ENCODE measurements at regions of chr5 and their contacts with region 1.

Region 1: GRCh38 chr5:143413958-143414669 is 10.6 kb upstream of the NR3C1 start:
- DNase-seq: no peak
- ATAC-seq: no peak
- H3K4me3 ChIP-seq: no peak overlapping the region
- H3K27ac ChIP-seq: no peak overlapping the region
- H3K4me1 ChIP-seq: no peaks in the 10 kb centered on the region; a peak in 1 of 4 replicates
- H3K27me3 ChIP-seq: no peaks in the 10 kb centered on the region
- CTCF ChIP-seq: no peak
- POLR2A ChIP-seq: no peak
- RAD21 ChIP-seq: no peak

Region 2: GRCh38 chr5:142860270-142860669 is 553.8 kb before region 1 on chr5:
- CTCF ChIA-PET with region 1: no interaction called
- POLR2A ChIA-PET with region 1: no interaction called
- RAD21 ChIA-PET with region 1: no interaction called
- intact Hi-C with region 1: no loop called
- DNase-seq: no peak
- ATAC-seq: no peak
- H3K4me3 ChIP-seq: no peak overlapping the region
- H3K27ac ChIP-seq: no peak overlapping the region
- H3K4me1 ChIP-seq: peaks cover 21 to 35% of the 10 kb centered on the region in 2 experiments; a peak in 2 of 4 replicates
- H3K27me3 ChIP-seq: no peaks in the 10 kb centered on the region
- CTCF ChIP-seq: no peak
- POLR2A ChIP-seq: no peak
- RAD21 ChIP-seq: no peak

Region 3: DNA sequence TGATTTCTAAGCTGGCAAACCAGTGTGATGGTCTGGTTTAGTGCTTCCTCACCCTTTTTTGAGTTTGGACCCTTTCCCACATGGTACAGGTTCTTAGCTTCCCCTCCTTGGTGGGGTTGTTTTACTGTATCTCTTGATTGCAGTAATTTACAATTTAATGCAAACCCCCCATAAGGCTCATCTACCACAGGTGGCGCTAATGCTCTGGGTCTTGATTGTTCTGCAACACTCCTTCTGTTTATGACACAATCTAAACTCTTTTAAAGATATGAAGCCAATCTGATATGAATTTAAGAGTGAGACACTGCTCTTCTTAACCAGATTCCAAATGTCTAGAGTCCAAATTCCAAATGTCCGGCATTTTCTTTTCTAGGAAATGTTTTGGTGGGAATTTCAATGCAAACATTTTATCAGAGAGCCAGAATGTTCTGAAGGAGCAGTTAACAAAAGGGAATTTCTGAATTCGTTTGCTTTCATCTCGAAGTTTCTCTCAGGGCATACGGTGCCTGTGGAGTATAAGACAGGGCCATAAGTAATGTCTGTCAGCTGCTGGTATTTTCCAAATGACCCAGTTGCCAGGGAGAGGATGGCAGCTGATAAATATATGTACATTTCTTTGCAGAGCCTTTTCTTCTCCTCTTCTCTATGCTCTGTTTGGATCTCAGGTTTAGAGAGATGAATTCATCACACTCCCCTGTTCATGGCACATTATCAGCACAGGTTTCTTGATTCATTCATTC is 397.2 kb before region 1 on chr5:
- CTCF ChIA-PET with region 1: no interaction called
- POLR2A ChIA-PET with region 1: no interaction called
- RAD21 ChIA-PET with region 1: no interaction called
- intact Hi-C with region 1: loop called (anchors 10 kb)
- DNase-seq: no peak
- ATAC-seq: peak; percentile 73
- H3K4me3 ChIP-seq: no peak overlapping the region
- H3K27ac ChIP-seq: no peak overlapping the region
- H3K4me1 ChIP-seq: no peaks in the 10 kb centered on the region
- H3K27me3 ChIP-seq: no peaks in the 10 kb centered on the region
- CTCF ChIP-seq: peak; percentile 51 to 80 (median 66); a peak in 5 of 6 replicates
- POLR2A ChIP-seq: no peak
- RAD21 ChIP-seq: peak; percentile 86

Region 4: GRCh38 chr5:143426437-143426991 is 12.4 kb after region 1 on chr5:
- CTCF ChIA-PET with region 1: no interaction called
- POLR2A ChIA-PET with region 1: no interaction called
- RAD21 ChIA-PET with region 1: no interaction called
- intact Hi-C with region 1: no loop called
- DNase-seq: no peak
- ATAC-seq: no peak
- H3K4me3 ChIP-seq: no peak overlapping the region
- H3K27ac ChIP-seq: no peak overlapping the region
- H3K4me1 ChIP-seq: no peaks in the 10 kb centered on the region
- H3K27me3 ChIP-seq: no peaks in the 10 kb centered on the region
- CTCF ChIP-seq: no peak
- POLR2A ChIP-seq: no peak
- RAD21 ChIP-seq: no peak

Measured in HCT116 (cell line).